Vagina (tissue), 2 donors: ENCODE measurements at regions of chr4 and their contacts with region 1.

Region 1: DNA sequence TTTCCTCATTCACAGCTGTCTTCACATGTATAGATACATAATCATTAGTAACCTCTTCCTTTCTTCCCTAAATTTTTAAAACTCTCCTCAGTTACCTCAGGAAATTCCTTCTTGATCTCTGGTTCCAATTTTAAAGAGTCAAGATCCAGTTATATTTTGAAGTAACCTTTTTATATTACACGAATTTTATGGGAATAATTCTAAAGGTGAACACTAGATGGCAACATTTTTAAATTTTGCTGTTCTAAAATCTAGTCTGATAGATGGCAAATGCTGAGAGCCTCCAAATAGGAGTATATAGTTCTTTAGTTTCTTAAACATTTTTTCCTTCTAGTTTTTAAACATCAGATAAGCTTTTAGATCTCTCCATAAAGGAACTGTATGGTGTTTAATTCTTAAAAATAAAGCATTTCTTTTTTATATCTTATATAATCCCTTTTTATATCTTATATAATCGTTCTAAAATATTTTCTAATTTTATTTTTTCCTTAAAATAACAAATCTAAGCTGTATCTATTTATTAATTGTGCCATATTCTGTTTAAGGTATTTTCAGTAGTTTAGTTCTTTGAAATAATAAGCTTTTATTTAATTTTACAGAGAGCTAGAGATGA is 37.9 kb upstream of the PAPSS1 start:
- DNase-seq: no peak
- H3K4me3 ChIP-seq: no peak overlapping the region
- H3K27ac ChIP-seq: no peak overlapping the region
- H3K4me1 ChIP-seq: no peaks in the 10 kb centered on the region
- H3K27me3 ChIP-seq: no peaks in the 10 kb centered on the region
- CTCF ChIP-seq: peak in 2 of 3 experiments; percentile 31 to 66
- POLR2A ChIP-seq: no peak

Region 2: GRCh38 chr4:107743532-107743931 is 14.4 kb before region 1 on chr4:
- intact Hi-C with region 1: no loop called
- DNase-seq: no peak
- H3K4me3 ChIP-seq: no peak overlapping the region
- H3K27ac ChIP-seq: no peak overlapping the region
- H3K4me1 ChIP-seq: peaks cover 16% of the 10 kb centered on the region
- H3K27me3 ChIP-seq: no peaks in the 10 kb centered on the region
- CTCF ChIP-seq: no peak
- POLR2A ChIP-seq: no peak

Region 3: DNA sequence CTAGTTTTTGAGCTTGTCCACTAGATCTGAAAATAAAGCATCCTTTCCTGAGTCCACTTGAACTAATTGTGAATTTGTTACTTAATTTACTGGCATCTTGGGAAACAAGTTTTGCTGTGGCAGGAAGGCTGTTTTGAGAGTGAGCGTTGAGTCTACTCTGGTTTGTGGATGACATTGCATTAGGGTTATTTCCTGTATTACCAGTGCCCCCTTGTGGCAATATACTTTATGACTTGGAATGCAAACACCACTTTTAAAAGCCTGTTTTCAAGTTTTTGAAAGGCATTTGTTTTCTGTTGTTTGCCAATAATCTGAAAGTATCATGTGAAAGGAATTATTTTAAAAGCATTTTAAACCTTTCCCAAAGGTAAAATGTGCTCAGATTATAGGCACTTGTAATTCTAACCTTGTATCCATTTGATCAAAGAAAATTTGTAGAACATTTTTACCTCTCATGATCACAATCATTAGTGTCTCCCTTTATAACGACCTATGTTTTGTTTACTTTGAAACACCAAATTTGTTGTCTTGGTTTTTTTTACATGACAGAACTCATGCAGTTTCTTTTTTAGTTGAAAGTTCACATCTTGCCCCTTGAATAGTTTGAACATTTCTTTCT is 155.4 kb after region 1 on chr4:
- intact Hi-C with region 1: loop called (anchors 5 kb)
- DNase-seq: no peak
- H3K4me3 ChIP-seq: no peak overlapping the region
- H3K27ac ChIP-seq: no peak overlapping the region
- H3K4me1 ChIP-seq: no peaks in the 10 kb centered on the region
- H3K27me3 ChIP-seq: no peaks in the 10 kb centered on the region
- CTCF ChIP-seq: peak; percentile 79 to 84 (median 83)
- POLR2A ChIP-seq: no peak

Region 4: GRCh38 chr4:108008721-108009120 is 250.8 kb after region 1 on chr4:
- intact Hi-C with region 1: no loop called
- DNase-seq: no peak
- H3K4me3 ChIP-seq: no peak overlapping the region
- H3K27ac ChIP-seq: no peak overlapping the region
- H3K4me1 ChIP-seq: no peaks in the 10 kb centered on the region
- H3K27me3 ChIP-seq: no peaks in the 10 kb centered on the region
- CTCF ChIP-seq: no peak
- POLR2A ChIP-seq: no peak